SK-N-SH (cell line): ENCODE measurements at regions of chr17 and their contacts with region 1.

Region 1: GRCh38 chr17:2909175-2909845 is 113.1 kb downstream of the RAP1GAP2 start:
- DNase-seq: peak; percentile 69
- H3K4me3 ChIP-seq: no peak overlapping the region
- H3K27ac ChIP-seq: peak overlapping the region in 1 of 2 experiments; percentile 91; a peak in 2 of 4 replicates
- H3K4me1 ChIP-seq: peaks cover 0 to 74% of the 10 kb centered on the region in 2 experiments; a peak in 1 of 4 replicates
- H3K27me3 ChIP-seq: no peaks in the 10 kb centered on the region
- CTCF ChIP-seq: no peak
- EP300 ChIP-seq: peak in 1 of 2 experiments; percentile 21; a peak in 1 of 4 replicates
- RAD21 ChIP-seq: peak; percentile 39

Region 2: GRCh38 chr17:2952174-2952836 is 43.0 kb after region 1 on chr17:
- CTCF ChIA-PET with region 1: no interaction called
- POLR2A ChIA-PET with region 1: no interaction called
- DNase-seq: no peak
- H3K4me3 ChIP-seq: no peak overlapping the region
- H3K27ac ChIP-seq: peak overlapping the region; percentile 36 to 64; a peak in 3 of 4 replicates
- H3K4me1 ChIP-seq: peaks cover 16 to 22% of the 10 kb centered on the region in 2 experiments
- H3K27me3 ChIP-seq: no peaks in the 10 kb centered on the region
- CTCF ChIP-seq: no peak
- EP300 ChIP-seq: peak in 1 of 2 experiments; percentile 58; a peak in 1 of 4 replicates
- RAD21 ChIP-seq: no peak

Region 3: DNA sequence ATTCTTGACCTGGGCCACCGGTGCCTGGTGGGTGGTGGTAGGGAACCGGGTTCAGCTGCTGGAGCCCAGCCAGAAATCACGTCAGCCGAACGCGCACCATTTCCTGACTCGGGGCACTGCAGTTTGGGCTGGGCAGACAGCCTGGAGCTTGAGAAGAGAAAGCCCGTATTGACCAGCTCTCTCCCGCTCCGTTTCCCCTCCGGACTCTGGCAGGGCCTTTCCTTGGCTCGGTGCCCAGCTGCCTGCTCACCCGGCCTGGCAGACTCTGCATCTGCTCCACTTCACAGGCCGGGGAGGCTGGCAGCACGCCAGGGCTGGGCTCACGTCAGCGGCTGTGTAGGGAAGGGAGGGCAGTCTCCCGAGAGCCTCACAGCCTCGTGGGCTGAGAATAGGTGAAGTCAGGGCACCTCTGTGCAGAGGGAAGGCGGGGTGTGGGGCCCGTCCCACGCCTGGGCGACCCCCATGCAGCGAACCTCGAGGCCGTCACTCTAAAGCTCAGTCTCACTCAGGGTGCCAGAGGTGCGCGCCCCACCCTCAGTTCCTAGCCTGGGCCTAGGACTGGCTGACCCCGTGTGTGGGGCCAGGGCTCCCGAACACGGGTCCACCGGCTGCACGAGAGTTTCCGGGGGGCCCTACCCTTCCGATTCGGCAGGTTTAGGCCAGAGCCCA is 95.0 kb after region 1 on chr17:
- CTCF ChIA-PET with region 1: interaction called, 4 read pairs
- POLR2A ChIA-PET with region 1: interaction called, 15 read pairs
- DNase-seq: peak; percentile 97
- H3K4me3 ChIP-seq: 0 out of 4 replicates have a peak overlapping the region, but pooled peaks of 1 of the 2 experiments have one; percentile 6
- H3K27ac ChIP-seq: peak overlapping the region; percentile 88 to 96
- H3K4me1 ChIP-seq: peaks cover 34 to 42% of the 10 kb centered on the region in 2 experiments
- H3K27me3 ChIP-seq: no peaks in the 10 kb centered on the region
- CTCF ChIP-seq: no peak
- EP300 ChIP-seq: peak; percentile 82 to 93
- RAD21 ChIP-seq: no peak; the same call in none of the 2 replicates

Region 4: DNA sequence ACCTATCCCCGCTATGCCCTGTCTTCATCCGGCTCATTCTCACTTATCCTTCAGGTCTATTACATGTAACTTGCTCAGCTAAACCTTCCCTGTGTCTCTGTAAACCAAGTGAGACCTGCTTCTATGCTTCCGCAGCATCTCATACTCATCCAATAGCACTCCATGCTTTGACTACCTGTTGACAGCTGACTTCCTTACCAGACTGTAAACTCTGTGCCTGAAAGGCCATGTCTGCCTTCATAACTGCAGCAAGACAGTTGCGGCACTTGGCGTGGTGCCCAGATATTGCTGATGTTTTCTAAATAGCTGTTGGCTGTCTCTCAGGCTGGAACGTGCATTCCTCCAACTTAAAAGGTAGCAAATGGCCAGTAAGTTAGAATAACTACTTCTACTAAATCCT is 490.7 kb after region 1 on chr17:
- CTCF ChIA-PET with region 1: no interaction called
- POLR2A ChIA-PET with region 1: no interaction called
- DNase-seq: no peak
- H3K4me3 ChIP-seq: no peak overlapping the region
- H3K27ac ChIP-seq: no peak overlapping the region
- H3K4me1 ChIP-seq: no peaks in the 10 kb centered on the region
- H3K27me3 ChIP-seq: no peaks in the 10 kb centered on the region
- CTCF ChIP-seq: no peak
- EP300 ChIP-seq: no peak
- RAD21 ChIP-seq: no peak